OCI-LY7 (cell line): ENCODE measurements at regions of chr12 and their contacts with region 1.

Region 1: DNA sequence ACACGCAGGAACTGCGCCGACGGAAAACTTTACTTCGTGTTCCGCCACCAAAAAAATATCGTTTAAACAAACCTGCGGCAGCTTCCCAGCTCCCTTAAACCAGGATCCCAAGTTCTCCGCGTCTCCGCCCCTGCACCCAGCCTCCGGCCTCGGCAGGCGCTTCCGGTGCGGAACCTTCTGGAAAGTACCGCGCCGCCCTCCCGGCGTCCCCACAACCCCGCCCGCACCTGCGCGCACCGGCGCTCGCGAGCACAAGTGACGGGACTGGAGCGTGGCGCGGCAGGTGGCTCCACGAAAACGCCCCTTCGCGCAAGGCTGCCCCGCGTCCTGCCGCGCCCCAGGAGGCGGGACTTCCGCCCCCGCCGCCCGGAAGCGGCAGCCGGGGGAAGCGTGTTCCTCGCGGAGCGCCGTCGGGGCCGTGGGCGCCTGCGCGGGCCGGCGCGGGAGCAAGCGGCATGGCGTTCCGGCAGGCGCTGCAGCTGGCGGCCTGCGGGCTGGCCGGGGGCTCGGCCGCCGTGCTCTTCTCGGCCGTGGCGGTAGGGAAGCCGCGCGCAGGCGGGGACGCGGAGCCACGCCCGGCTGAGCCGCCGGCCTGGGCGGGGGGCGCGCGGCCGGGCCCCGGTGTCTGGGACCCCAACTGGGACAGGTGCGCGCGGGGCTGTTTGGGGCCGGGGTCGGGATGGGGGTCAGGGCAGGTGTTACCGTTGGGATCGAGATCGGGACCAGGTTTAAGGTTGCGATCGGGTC is at the start of gene PGAM5:
- DNase-seq: peak; percentile 94
- H3K4me3 ChIP-seq: peak within 1 kb of the TSS; percentile 100
- H3K27ac ChIP-seq: peak within 1 kb of the TSS; percentile 73
- H3K4me1 ChIP-seq: peaks cover 11% of the 10 kb centered on the region
- CTCF ChIP-seq: no peak
- total RNA-seq, gene PGAM5: 94.9 and 97.2 TPM in 2 replicates

Region 2: GRCh38 chr12:132170094-132170636 is 540.4 kb before region 1 on chr12:
- CTCF ChIA-PET with region 1: no interaction called
- POLR2A ChIA-PET with region 1: no interaction called
- intact Hi-C with region 1: no loop called
- DNase-seq: no peak
- H3K4me3 ChIP-seq: no peak overlapping the region
- H3K27ac ChIP-seq: no peak overlapping the region
- H3K4me1 ChIP-seq: peaks cover 6% of the 10 kb centered on the region
- CTCF ChIP-seq: no peak

Region 3: GRCh38 chr12:132687208-132688164 is 23.1 kb before region 1 on chr12 and contains the starts of genes POLE and PXMP2:
- CTCF ChIA-PET with region 1: no interaction called
- POLR2A ChIA-PET with region 1: no interaction called
- intact Hi-C with region 1: loop called (anchors 2 kb)
- DNase-seq: peak; percentile 98
- H3K4me3 ChIP-seq: peak within 1 kb of the TSS; percentile 98
- H3K27ac ChIP-seq: peak within 1 kb of the TSS; percentile 74
- H3K4me1 ChIP-seq: peaks cover 25% of the 10 kb centered on the region
- CTCF ChIP-seq: no peak
- total RNA-seq, gene POLE: 157 and 159 TPM in 2 replicates
- total RNA-seq, gene PXMP2: 97.3 and 103 TPM in 2 replicates